ENCODE measurements at regions of chr9 and their contacts with region 1.

Region 1: GRCh38 chr9:127224178-127224882 is 40.2 kb upstream of the GARNL3 start:
- DNase-seq: peak; percentile 93
- ATAC-seq: peak; percentile 79
- H3K4me3 Mint-ChIP-seq: peak overlapping the region; percentile 68
- H3K27ac Mint-ChIP-seq: peak overlapping the region; percentile 16
- H3K4me1 Mint-ChIP-seq: peaks cover 24% of the 10 kb centered on the region
- H3K27me3 Mint-ChIP-seq: peaks cover 15% of the 10 kb centered on the region

Region 2: DNA sequence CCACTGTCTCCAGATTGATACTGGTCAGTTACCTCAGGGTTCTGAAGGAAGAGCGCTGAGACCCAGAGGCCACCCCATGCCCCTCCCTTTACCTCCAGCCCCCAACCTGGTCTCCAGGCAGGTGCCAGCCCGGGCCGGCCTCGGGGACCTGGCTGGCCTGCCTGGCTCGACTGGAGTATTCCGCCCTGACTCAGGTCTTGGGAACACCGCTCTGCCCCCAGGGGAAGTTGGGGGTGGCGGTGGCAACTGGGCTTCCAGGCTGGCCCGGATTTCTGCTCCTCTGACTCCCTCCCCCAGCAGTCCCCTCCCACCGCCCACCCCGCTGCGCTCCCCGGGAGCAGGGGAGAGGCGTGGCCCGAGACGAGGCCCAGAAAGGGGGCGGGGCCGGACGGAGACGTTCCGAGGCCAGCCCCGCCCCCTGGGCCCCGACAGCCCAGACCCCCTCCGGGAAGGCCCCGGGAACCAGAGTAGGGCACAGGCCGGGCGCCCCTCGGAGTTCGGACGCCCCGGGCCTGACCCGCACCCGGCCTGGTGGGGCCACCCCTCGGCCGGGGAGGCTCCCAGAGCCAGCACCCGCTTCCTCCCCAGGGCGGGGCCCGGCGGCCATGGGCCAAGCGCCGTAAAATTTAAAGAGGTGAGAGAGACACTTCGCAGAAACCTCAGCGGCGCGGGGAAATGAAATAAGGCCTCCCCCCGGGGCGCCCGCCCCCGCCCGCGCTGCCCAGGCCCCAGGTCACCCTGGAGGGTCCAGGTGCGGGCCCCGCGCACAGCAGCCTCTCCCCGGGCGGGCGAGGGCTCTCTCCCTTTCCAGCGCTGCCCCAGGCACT is 501.9 kb before region 1 on chr9:
- CTCF ChIA-PET with region 1: no interaction called
- POLR2A ChIA-PET with region 1: no interaction called
- intact Hi-C with region 1: loop called in 1 of 2 experiments (anchors 1 kb)
- DNase-seq: peak; percentile 96
- ATAC-seq: peak; percentile 73
- H3K4me3 Mint-ChIP-seq: peak overlapping the region; percentile 77
- H3K27ac Mint-ChIP-seq: peak overlapping the region; percentile 89
- H3K4me1 Mint-ChIP-seq: peaks cover 43% of the 10 kb centered on the region
- H3K27me3 Mint-ChIP-seq: no peaks in the 10 kb centered on the region

Region 3: GRCh38 chr9:127187231-127187956 is 36.9 kb before region 1 on chr9:
- CTCF ChIA-PET with region 1: no interaction called
- POLR2A ChIA-PET with region 1: no interaction called
- intact Hi-C with region 1: no loop called
- DNase-seq: no peak
- ATAC-seq: no peak
- H3K4me3 Mint-ChIP-seq: no peak overlapping the region
- H3K27ac Mint-ChIP-seq: no peak overlapping the region
- H3K4me1 Mint-ChIP-seq: no peaks in the 10 kb centered on the region
- H3K27me3 Mint-ChIP-seq: peaks cover 3% of the 10 kb centered on the region

Region 4: GRCh38 chr9:127388037-127388855 is 163.9 kb after region 1 on chr9:
- CTCF ChIA-PET with region 1: no interaction called
- POLR2A ChIA-PET with region 1: no interaction called
- intact Hi-C with region 1: loop called in 1 of 2 experiments (anchors 2 kb)
- DNase-seq: peak; percentile 94
- ATAC-seq: peak; percentile 97
- H3K4me3 Mint-ChIP-seq: peak overlapping the region; percentile 3
- H3K27ac Mint-ChIP-seq: peak overlapping the region; percentile 81
- H3K4me1 Mint-ChIP-seq: peaks cover 20% of the 10 kb centered on the region
- H3K27me3 Mint-ChIP-seq: peaks cover 68% of the 10 kb centered on the region

Region 5: GRCh38 chr9:127568971-127569885 is 344.9 kb after region 1 on chr9:
- CTCF ChIA-PET with region 1: no interaction called
- POLR2A ChIA-PET with region 1: no interaction called
- intact Hi-C with region 1: loop called in 1 of 2 experiments (anchors 1 kb)
- DNase-seq: peak; percentile 88
- ATAC-seq: peak; percentile 85
- H3K4me3 Mint-ChIP-seq: peak overlapping the region; percentile 71
- H3K27ac Mint-ChIP-seq: peak overlapping the region; percentile 38
- H3K4me1 Mint-ChIP-seq: peaks cover 26% of the 10 kb centered on the region
- H3K27me3 Mint-ChIP-seq: no peaks in the 10 kb centered on the region

Region 6: DNA sequence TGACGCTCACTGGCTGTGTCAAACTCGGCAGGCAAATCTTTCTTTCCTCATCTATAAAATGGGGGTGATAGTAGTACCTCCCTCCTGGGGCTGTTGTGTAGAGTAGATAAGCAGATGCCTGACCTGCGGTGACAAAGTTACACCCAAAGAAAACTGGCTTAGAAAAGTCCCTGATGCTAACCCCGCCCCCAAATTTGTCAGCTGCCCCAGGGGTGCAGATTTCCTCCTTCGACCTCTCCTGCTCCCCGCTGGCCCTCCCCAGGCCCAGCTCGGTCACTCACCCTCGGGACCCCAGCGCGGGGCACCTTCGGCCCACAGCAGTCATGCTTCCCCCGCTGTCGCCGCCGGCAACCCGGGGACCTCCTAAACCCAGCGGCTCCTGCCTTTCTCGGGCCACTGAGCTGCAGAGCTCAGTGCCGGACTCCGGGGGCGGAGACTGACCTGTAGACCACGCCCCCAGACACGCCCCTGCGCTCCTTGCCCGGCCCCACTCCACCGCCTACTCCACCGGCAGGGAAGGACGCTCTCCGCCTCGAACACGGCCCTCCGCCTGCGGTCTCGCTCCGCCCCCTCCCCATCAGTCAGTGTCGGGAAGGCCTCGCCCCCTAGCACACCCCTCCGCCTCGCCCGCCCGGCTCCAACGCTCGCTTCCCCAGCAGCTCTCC is 546.7 kb after region 1 on chr9:
- CTCF ChIA-PET with region 1: no interaction called
- POLR2A ChIA-PET with region 1: no interaction called
- intact Hi-C with region 1: loop called (anchors 10 kb)
- DNase-seq: peak; percentile 99
- ATAC-seq: peak; percentile 95
- H3K4me3 Mint-ChIP-seq: peak overlapping the region; percentile 80
- H3K27ac Mint-ChIP-seq: peak overlapping the region; percentile 80
- H3K4me1 Mint-ChIP-seq: peaks cover 59% of the 10 kb centered on the region
- H3K27me3 Mint-ChIP-seq: no peaks in the 10 kb centered on the region

Measured in activated CD4-positive, alpha-beta T cell treated with anti-CD3 and anti-CD28 coated beads for 36 hours (primary cell).